ENCODE measurements at regions of chr11 and their contacts with region 1.

Region 1: GRCh38 chr11:34480314-34480713 is 33.3 kb downstream of the ELF5 start:
- DNase-seq: peak; percentile 59 to 63
- H3K4me3 ChIP-seq: no peak overlapping the region
- H3K4me1 ChIP-seq: peaks cover 7% of the 10 kb centered on the region
- H3K27me3 ChIP-seq: no peaks in the 10 kb centered on the region

Region 2: GRCh38 chr11:34149786-34150185 is 330.5 kb before region 1 on chr11:
- in situ Hi-C with region 1: loop called (anchors 10 kb)
- DNase-seq: peak in 1 of 2 experiments; percentile 29
- H3K4me3 ChIP-seq: no peak overlapping the region
- H3K4me1 ChIP-seq: no peaks in the 10 kb centered on the region
- H3K27me3 ChIP-seq: no peaks in the 10 kb centered on the region

Region 3: GRCh38 chr11:34749666-34750659 is 269.6 kb after region 1 on chr11:
- in situ Hi-C with region 1: no loop called
- DNase-seq: no peak
- H3K4me3 ChIP-seq: no peak overlapping the region
- H3K4me1 ChIP-seq: no peaks in the 10 kb centered on the region
- H3K27me3 ChIP-seq: peaks cover 3% of the 10 kb centered on the region; the same call in 1 of the 2 replicates

Region 4: DNA sequence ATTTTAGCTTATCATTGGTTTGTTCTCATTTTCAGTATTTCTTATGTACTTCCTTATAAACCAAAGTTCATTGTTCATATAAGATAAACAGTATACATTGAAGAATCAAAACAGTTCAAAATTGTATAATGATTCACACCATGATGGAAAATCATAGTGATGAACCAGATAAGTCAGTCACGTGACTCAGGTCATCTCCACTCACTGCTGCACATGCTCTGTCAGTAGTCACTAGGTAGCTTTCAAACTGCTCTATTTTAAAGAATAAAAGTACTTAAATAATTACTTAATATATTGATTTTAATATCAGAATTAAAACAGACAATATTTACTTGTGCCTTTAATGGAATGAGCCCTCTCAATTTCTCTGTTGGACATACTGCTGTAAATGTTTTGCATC is 473.6 kb after region 1 on chr11:
- in situ Hi-C with region 1: no loop called
- DNase-seq: no peak
- H3K4me3 ChIP-seq: no peak overlapping the region
- H3K4me1 ChIP-seq: no peaks in the 10 kb centered on the region
- H3K27me3 ChIP-seq: no peaks in the 10 kb centered on the region